HepG2 (cell line): ENCODE measurements at regions of chr6 and their contacts with region 1.

Region 1: GRCh38 chr6:157323255-157323965 is at the start of gene TMEM242:
- DNase-seq: peak; percentile 89
- ATAC-seq: peak; percentile 94
- H3K4me3 ChIP-seq: peak within 1 kb of the TSS; percentile 94 to 96 (median 96)
- H3K27ac ChIP-seq: peak within 1 kb of the TSS; percentile 90
- H3K4me1 ChIP-seq: peaks cover 52% of the 10 kb centered on the region
- H3K27me3 ChIP-seq: no peaks in the 10 kb centered on the region; a peak in 2 of 5 replicates
- CTCF ChIP-seq: peak; percentile 42; the same call in 1 of the 2 replicates
- EP300 ChIP-seq: peak; percentile 80 to 85; a peak in 3 of 4 replicates
- POLR2A ChIP-seq: peak; percentile 96 to 97
- RAD21 ChIP-seq: peak; percentile 71
- total RNA-seq, gene TMEM242: 6.4 and 11.1 TPM in 2 replicates

Region 2: DNA sequence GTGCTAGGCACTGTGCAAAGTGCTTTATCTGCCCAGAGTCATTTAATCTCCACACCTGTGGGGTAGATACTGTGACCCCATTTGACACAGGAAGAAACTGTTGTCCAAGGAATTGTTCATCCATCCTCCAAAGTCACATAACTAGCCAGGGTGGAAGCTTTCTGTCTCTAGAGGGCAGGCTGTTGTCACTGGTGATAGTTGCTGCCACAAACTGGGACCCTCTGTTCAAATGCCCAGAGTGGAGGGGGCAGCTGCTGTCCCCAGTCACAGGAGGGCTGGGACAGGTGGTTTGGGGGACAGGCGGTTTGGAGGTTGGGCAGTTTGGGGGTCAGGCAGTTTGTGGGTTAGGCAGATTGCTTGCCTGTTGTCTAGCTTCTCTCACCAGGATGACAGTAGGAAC is 16.0 kb after region 1 on chr6:
- CTCF ChIA-PET with region 1: no interaction called
- POLR2A ChIA-PET with region 1: interaction called, 42 read pairs
- in situ Hi-C with region 1: no loop called
- intact Hi-C with region 1: no loop called
- DNase-seq: no peak
- ATAC-seq: peak; percentile 68
- H3K4me3 ChIP-seq: no peak overlapping the region
- H3K27ac ChIP-seq: no peak overlapping the region
- H3K4me1 ChIP-seq: peaks cover 15% of the 10 kb centered on the region
- H3K27me3 ChIP-seq: peaks cover 0 to 5% of the 10 kb centered on the region in 2 experiments; a peak in 3 of 5 replicates
- CTCF ChIP-seq: peak; percentile 81
- EP300 ChIP-seq: no peak
- POLR2A ChIP-seq: no peak
- RAD21 ChIP-seq: peak; percentile 62; the same call in 1 of the 2 replicates

Region 3: GRCh38 chr6:157372501-157372900 is 49.1 kb after region 1 on chr6:
- CTCF ChIA-PET with region 1: no interaction called
- POLR2A ChIA-PET with region 1: interaction called, 10 read pairs
- in situ Hi-C with region 1: no loop called
- intact Hi-C with region 1: no loop called
- DNase-seq: no peak
- ATAC-seq: peak; percentile 81
- H3K4me3 ChIP-seq: no peak overlapping the region
- H3K27ac ChIP-seq: no peak overlapping the region
- H3K4me1 ChIP-seq: peaks cover 30% of the 10 kb centered on the region; the same call in 1 of the 2 replicates
- H3K27me3 ChIP-seq: peaks cover 0 to 4% of the 10 kb centered on the region in 2 experiments; a peak in 1 of 5 replicates
- CTCF ChIP-seq: no peak
- EP300 ChIP-seq: no peak
- POLR2A ChIP-seq: no peak
- RAD21 ChIP-seq: no peak

Region 4: GRCh38 chr6:157379656-157380454 is 56.4 kb after region 1 on chr6:
- CTCF ChIA-PET with region 1: no interaction called
- POLR2A ChIA-PET with region 1: interaction called, 35 read pairs
- in situ Hi-C with region 1: no loop called
- intact Hi-C with region 1: no loop called
- DNase-seq: peak; percentile 90
- ATAC-seq: peak; percentile 94
- H3K4me3 ChIP-seq: peak overlapping the region; percentile 91 to 95 (median 92)
- H3K27ac ChIP-seq: peak overlapping the region; percentile 56
- H3K4me1 ChIP-seq: peaks cover 47% of the 10 kb centered on the region
- H3K27me3 ChIP-seq: no peaks in the 10 kb centered on the region; a peak in 1 of 5 replicates
- CTCF ChIP-seq: peak; percentile 19; the same call in 1 of the 2 replicates
- EP300 ChIP-seq: no peak
- POLR2A ChIP-seq: peak in 1 of 2 experiments; percentile 49; a peak in 2 of 4 replicates
- RAD21 ChIP-seq: no peak

Region 5: GRCh38 chr6:157535339-157536222 is 212.2 kb after region 1 on chr6:
- CTCF ChIA-PET with region 1: no interaction called
- POLR2A ChIA-PET with region 1: interaction called, 73 read pairs
- in situ Hi-C with region 1: no loop called
- intact Hi-C with region 1: loop called (anchors 5 kb)
- DNase-seq: peak; percentile 86
- ATAC-seq: no peak
- H3K4me3 ChIP-seq: peak overlapping the region in 2 of 3 experiments; percentile 19; a peak in 3 of 6 replicates
- H3K27ac ChIP-seq: peak overlapping the region; percentile 64
- H3K4me1 ChIP-seq: peaks cover 100% of the 10 kb centered on the region
- H3K27me3 ChIP-seq: no peaks in the 10 kb centered on the region
- CTCF ChIP-seq: no peak
- EP300 ChIP-seq: no peak
- POLR2A ChIP-seq: peak in 1 of 2 experiments; percentile 40; a peak in 1 of 4 replicates
- RAD21 ChIP-seq: no peak

Region 6: DNA sequence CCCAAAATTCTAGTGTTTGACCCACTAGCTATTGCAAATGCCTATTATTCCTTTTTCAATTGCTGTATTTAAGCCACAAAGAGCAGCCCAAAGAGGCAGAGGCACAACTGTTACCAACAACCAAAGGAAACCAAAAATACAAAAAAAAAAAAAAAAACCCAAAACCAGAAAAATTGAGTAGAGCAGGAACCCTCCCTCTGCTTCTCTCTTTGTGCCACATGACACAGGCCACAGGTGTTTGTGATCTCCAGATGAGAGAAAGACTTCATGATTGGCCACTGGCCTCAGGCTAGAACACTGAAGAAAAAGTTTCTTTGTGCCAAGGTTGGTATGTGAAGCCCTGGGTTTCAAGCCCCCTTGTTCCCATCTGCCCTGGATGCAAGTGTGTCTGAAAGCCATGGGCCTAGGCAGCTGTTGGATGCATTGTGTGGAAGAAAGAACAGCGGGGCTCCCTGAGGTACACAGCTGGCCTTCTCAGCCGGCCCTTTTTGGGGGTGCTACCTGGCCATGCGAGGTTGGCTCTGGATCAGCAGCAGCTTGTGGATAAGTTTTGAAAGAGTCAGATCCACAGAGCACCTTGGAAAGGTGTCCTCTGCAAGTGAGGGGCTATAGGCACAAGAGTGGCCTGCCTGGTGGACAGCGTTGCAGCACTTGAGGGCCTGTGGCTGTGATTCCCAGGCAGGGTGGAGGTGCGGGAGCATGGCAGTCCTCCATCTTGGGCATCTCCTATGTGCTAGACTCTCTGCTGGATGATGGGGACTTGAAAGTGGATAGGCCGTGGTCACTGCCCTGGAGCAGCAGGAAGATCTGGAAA is 262.1 kb after region 1 on chr6:
- CTCF ChIA-PET with region 1: no interaction called
- POLR2A ChIA-PET with region 1: interaction called, 24 read pairs
- in situ Hi-C with region 1: no loop called
- intact Hi-C with region 1: no loop called
- DNase-seq: no peak
- ATAC-seq: peak; percentile 41
- H3K4me3 ChIP-seq: no peak overlapping the region
- H3K27ac ChIP-seq: peak overlapping the region; percentile 67
- H3K4me1 ChIP-seq: peaks cover 28% of the 10 kb centered on the region
- H3K27me3 ChIP-seq: no peaks in the 10 kb centered on the region
- CTCF ChIP-seq: no peak
- EP300 ChIP-seq: no peak
- POLR2A ChIP-seq: no peak
- RAD21 ChIP-seq: no peak

Region 7: DNA sequence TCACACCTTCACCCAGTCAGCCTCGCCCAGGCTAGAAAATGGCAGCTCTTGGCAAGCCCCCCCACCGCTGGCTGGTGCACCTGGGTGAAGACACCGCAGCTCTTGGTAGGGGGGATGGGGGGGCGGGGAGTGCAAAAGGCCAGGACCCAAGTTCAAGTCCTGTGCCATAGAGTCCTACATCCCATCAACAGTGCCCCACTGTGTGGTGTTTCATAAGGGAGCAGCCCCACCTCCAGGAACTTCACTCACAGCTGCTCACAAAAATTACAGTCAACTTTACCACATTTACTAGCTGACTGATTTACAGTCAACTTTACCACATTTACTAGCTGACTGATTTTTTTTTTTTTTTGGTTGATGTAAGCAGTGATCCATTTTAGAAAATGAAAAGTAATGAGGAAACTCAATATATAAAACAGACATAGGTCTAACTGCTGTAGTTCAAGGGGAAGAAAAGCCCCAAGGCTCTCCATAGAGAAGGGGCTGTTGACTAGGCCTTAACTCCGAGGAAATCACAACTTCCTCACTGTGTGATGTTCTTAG is 290.7 kb after region 1 on chr6:
- CTCF ChIA-PET with region 1: no interaction called
- POLR2A ChIA-PET with region 1: interaction called, 28 read pairs
- in situ Hi-C with region 1: loop called (anchors 5 kb)
- intact Hi-C with region 1: no loop called
- DNase-seq: peak; percentile 41
- ATAC-seq: peak; percentile 76
- H3K4me3 ChIP-seq: peak overlapping the region in 1 of 3 experiments; percentile 4; a peak in 1 of 6 replicates
- H3K27ac ChIP-seq: peak overlapping the region; percentile 68
- H3K4me1 ChIP-seq: peaks cover 37% of the 10 kb centered on the region
- H3K27me3 ChIP-seq: no peaks in the 10 kb centered on the region
- CTCF ChIP-seq: peak; percentile 85
- EP300 ChIP-seq: no peak
- POLR2A ChIP-seq: no peak
- RAD21 ChIP-seq: peak; percentile 57; the same call in 1 of the 2 replicates

Region 8: GRCh38 chr6:158231551-158232315 is 908.3 kb after region 1 on chr6:
- CTCF ChIA-PET with region 1: no interaction called
- POLR2A ChIA-PET with region 1: no interaction called
- in situ Hi-C with region 1: no loop called
- intact Hi-C with region 1: no loop called
- DNase-seq: peak; percentile 74
- ATAC-seq: peak; percentile 71
- H3K4me3 ChIP-seq: peak overlapping the region; percentile 63 to 87 (median 78)
- H3K27ac ChIP-seq: peak overlapping the region; percentile 81
- H3K4me1 ChIP-seq: peaks cover 49% of the 10 kb centered on the region
- H3K27me3 ChIP-seq: no peaks in the 10 kb centered on the region; a peak in 1 of 5 replicates
- CTCF ChIP-seq: no peak
- EP300 ChIP-seq: no peak
- POLR2A ChIP-seq: peak; percentile 52 to 72
- RAD21 ChIP-seq: no peak